Panc1 (cell line): ENCODE measurements at regions of chr5 and their contacts with region 1.

Region 1: DNA sequence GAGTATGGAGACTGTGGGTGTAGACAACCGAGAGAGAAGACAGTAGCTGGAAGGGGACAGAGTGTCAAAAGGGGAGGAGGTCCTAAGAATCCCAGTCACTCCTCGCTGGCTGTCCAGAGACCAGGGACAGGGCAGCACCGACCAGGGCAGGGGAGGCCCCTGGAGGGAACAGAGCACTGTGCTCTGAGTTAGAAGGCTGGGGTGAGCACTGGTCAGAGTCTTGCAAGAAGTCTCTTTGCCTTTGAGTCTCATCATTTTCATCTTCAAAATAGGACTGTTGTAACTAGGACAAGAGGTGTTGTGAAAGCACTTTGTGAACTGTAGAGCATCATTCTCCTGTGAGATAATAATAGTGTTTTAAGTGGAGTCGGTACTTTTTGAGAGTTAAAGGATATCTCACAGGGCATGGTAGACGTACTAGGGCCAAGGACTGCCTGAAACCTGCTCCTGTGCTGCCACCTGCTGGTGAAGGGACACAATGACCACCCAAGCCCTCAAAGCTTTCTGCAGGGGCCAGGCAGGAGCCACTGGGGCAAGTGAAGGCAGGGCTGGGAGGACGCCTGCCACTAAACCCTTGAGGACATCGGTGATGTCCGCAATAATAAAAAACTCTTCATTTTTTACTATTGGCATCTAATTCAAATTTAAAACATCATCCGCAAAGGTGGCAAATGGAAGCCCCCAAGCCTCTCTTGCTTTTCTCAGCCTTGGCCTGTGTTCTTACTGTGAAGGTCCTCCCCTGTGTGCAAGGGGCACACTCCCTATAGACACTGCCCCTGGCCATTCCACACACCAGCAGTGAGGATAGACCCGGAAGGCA is 28.2 kb downstream of the SLC6A7 start:
- DNase-seq: peak; percentile 60
- ATAC-seq: peak; percentile 96
- H3K4me3 ChIP-seq: no peak overlapping the region
- H3K27ac ChIP-seq: no peak overlapping the region
- H3K4me1 ChIP-seq: no peaks in the 10 kb centered on the region
- H3K27me3 ChIP-seq: no peaks in the 10 kb centered on the region
- CTCF ChIP-seq: peak; percentile 91

Region 2: GRCh38 chr5:149834246-149834855 is 383.7 kb before region 1 on chr5:
- CTCF ChIA-PET with region 1: no interaction called
- POLR2A ChIA-PET with region 1: interaction called, 12 read pairs
- in situ Hi-C with region 1: no loop called
- intact Hi-C with region 1: no loop called
- DNase-seq: peak; percentile 69
- ATAC-seq: peak; percentile 77
- H3K4me3 ChIP-seq: no peak overlapping the region
- H3K27ac ChIP-seq: no peak overlapping the region
- H3K4me1 ChIP-seq: peaks cover 10% of the 10 kb centered on the region
- H3K27me3 ChIP-seq: no peaks in the 10 kb centered on the region
- CTCF ChIP-seq: peak; percentile 89

Region 3: GRCh38 chr5:150129813-150130492 is 88.1 kb before region 1 on chr5:
- CTCF ChIA-PET with region 1: interaction called, 6 read pairs
- POLR2A ChIA-PET with region 1: no interaction called
- in situ Hi-C with region 1: no loop called
- intact Hi-C with region 1: loop called (anchors 1 kb)
- DNase-seq: peak; percentile 60
- ATAC-seq: peak; percentile 88
- H3K4me3 ChIP-seq: peak overlapping the region; percentile 24 to 48
- H3K27ac ChIP-seq: 0 out of 2 replicates have a peak overlapping the region, but pooled peaks have one; percentile 11
- H3K4me1 ChIP-seq: peaks cover 7% of the 10 kb centered on the region
- H3K27me3 ChIP-seq: no peaks in the 10 kb centered on the region
- CTCF ChIP-seq: peak; percentile 96

Region 4: DNA sequence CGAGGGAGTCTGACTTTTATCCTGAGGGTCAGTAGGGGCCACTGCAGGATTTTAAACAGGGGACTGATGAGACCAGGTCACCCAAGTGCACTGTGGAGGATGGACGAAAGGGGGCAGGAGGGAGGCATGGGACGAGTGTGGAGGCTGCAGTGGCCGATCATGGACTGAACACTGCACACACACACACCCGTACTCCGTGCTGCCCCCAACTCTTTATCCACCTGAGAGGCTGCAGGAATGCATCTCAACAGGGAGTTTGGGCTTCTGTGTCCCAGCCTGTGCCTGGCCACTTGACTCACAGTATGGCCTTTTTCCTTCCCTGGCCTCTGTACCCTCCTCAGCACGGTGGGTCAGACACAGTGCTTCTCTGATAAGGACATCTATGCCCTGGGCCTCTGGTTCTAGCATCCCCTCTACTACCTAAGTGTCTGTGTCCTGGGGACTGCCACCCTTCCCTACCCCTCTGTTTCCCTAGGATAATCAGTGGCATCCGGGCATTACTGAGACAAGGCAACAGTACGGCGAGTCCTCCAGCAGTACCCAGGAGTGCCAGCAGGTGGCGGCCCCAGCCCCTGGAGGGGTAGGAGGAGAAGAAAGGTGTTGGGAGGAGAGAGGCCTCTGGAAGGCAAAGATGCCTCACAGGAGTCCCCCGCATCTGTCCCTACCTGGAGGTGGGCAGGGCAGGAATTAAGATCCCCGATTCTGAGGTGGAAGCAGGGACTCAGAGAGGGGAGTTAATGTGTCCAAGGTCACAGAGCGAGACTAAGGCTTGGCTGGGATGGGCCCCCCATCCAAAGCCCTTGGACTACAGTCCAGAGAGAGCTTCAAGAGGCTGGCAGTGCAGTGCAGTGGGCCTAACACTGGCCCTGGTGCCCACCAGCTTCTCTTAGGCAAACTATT is 56.6 kb before region 1 on chr5:
- CTCF ChIA-PET with region 1: interaction called, 7 read pairs
- POLR2A ChIA-PET with region 1: no interaction called
- in situ Hi-C with region 1: no loop called
- intact Hi-C with region 1: loop called (anchors 1 kb)
- DNase-seq: peak; percentile 64
- ATAC-seq: peak; percentile 92
- H3K4me3 ChIP-seq: peak overlapping the region in 1 of 2 experiments; percentile 27; a peak in 2 of 4 replicates
- H3K27ac ChIP-seq: no peak overlapping the region
- H3K4me1 ChIP-seq: no peaks in the 10 kb centered on the region
- H3K27me3 ChIP-seq: no peaks in the 10 kb centered on the region
- CTCF ChIP-seq: peak; percentile 98

Region 5: DNA sequence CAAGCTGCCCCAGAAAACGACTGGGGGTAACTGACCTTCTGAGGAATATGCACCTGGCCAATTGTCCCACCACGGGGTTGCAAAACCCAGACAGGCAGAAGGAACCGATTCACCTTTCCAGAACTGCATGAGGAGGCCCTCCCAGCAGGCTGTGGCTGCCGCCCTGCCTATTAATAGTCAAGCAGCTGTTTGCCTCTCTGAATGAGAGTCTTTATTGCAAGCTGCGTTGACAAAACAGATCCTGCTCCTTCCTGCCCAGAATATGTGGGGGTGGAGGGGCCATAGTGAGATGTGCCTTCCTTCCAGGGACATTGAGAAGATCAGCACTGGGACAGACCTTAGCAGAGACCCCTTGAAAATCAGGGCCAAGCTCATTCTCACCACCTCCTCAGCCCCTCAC is 121.1 kb after region 1 on chr5:
- CTCF ChIA-PET with region 1: no interaction called
- POLR2A ChIA-PET with region 1: no interaction called
- in situ Hi-C with region 1: no loop called
- intact Hi-C with region 1: no loop called
- DNase-seq: no peak
- ATAC-seq: no peak
- H3K4me3 ChIP-seq: no peak overlapping the region
- H3K27ac ChIP-seq: no peak overlapping the region
- H3K4me1 ChIP-seq: no peaks in the 10 kb centered on the region; the same call in 1 of the 2 replicates
- H3K27me3 ChIP-seq: no peaks in the 10 kb centered on the region
- CTCF ChIP-seq: no peak